Naive thymus-derived CD4-positive, alpha-beta T cell (primary cell): ENCODE measurements at regions of chr20 and their contacts with region 1.

Region 1: DNA sequence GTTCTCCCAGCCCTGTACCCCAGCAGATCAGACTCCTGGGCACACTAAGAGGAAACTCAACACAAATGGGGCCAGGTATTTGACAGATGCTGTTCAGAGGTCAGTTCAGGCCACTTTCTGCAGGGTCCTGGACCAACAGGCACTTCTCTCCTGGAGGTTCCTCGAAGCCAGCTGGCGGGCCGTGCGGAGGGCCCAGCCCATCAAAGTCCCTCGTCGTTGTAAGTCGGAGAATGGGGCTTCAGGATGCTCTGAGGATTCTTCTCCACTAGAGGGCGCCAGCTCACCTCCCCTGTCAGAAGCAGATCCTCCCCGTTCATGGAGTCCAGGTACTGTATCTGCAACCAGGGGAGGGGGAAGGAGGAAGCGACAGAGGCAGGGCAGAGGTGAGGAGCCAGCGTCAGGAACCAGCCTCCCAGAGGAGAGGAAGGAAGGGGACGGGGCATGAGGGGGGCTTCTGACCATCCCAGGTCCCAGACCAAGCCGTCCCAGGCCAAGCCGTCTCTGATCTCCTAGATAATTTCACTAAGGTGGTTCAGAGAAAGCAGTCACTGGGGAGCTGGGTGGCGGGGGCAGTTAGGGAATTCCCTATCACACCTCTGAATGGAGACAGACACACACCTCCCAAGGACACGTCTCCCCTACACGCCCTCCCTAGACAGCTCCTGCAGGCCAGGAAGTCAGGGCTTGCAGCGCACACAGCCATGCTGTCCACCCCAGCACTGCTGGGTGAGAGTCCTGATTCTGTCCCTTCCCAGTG is 11.7 kb upstream of the FAM83C start:
- DNase-seq: peak; percentile 57 to 87 (median 81)
- ATAC-seq: peak; percentile 96
- H3K4me3 ChIP-seq: no peak overlapping the region
- H3K4me3 Mint-ChIP-seq: no peak overlapping the region
- H3K27ac ChIP-seq: no peak overlapping the region
- H3K27ac Mint-ChIP-seq: peak overlapping the region in 6 of 9 donors; percentile 8 to 78 (median 60)
- H3K4me1 ChIP-seq: no peaks in the 10 kb centered on the region
- H3K4me1 Mint-ChIP-seq: peaks cover 0 to 40% (median 9%) of the 10 kb centered on the region in 7 donors
- H3K27me3 ChIP-seq: no peaks in the 10 kb centered on the region
- H3K27me3 Mint-ChIP-seq: no peaks in the 10 kb centered on the region

Region 2: DNA sequence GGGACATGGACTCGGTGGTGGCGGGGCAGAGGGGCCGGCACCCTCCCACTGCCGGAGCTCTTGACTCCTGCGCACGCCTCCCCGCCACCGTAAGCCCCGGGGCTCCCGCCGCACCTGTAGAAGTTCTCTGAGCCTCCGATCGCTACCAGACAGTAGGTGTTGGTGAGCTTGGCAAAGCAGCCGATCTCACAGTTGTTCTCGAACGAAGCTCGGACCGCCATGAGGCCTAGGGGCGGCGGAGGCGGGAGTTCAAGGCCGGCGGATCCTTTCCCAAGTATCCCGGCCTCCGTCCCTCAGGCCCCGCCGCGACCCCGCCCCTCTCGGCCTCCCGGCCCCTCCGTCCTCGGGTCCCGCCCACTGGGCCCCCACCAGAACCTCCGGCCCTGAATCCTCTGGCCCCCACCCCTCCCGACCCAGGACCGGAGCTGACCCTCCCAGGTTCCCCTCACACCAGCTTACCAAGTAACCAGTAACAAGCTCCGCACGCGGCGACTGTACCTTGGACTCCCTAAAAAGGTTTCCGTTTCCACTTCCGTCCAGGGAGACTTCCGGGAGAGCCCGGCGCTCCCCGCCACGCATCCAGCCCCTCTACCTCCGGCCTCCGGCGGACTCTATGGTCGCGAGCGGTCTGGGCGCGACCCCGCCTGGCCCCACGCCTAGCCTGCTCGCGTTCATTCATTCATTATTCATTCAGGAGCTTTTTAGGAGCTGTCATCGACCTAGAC is 19.5 kb before region 1 on chr20 and contains the start of gene EIF6:
- CTCF ChIA-PET with region 1: interaction called, 5 read pairs
- POLR2A ChIA-PET with region 1: interaction called, 5 read pairs
- intact Hi-C with region 1: loop called in 1 of 2 experiments (anchors 2 kb)
- DNase-seq: peak; percentile 23 to 78 (median 53)
- ATAC-seq: peak; percentile 80
- H3K4me3 ChIP-seq: peak within 1 kb of the TSS; percentile 56
- H3K4me3 Mint-ChIP-seq: peak within 1 kb of the TSS; percentile 71 to 96 (median 91)
- H3K27ac ChIP-seq: peak within 1 kb of the TSS; percentile 89
- H3K27ac Mint-ChIP-seq: peak within 1 kb of the TSS; percentile 79 to 94 (median 87)
- H3K4me1 ChIP-seq: peaks cover 7 to 8% of the 10 kb centered on the region in 2 donors
- H3K4me1 Mint-ChIP-seq: peaks cover 18 to 43% (median 30%) of the 10 kb centered on the region in 7 donors
- H3K27me3 ChIP-seq: no peaks in the 10 kb centered on the region
- H3K27me3 Mint-ChIP-seq: no peaks in the 10 kb centered on the region
- total RNA-seq, gene EIF6: 35.4 to 117 (median 39.9) TPM

Region 3: DNA sequence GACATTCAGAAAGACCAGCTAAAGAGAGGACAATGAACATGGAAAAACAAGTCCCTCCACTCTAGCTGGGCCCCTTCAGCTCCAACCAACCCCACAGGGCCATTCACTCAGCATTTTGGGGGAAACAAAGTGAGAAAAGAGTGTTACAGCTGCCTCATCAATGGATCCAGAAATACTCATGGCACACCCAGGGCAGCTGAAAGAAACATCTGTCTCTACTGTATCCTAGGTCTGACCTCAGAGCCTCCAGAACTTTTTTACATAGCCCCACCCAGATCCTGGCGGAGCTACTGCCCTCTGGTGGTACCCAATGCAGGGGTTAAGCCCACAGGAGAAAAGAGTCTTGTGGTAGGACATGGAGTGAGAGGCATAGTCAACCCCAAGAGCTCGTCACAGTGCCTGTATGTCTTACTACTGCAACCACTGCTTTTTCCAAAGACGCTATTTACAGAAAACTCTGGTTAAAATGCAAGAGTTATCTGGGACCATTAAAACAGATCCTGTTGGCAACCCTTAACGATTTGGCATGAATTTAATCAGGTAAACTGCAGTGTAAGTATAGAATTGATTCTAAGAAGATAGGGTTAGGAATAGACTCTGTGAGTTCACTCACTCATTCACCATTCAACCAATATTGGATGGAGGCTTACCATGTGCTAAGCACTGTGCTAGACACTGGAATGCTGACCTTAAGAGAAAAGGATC is 25.7 kb after region 1 on chr20:
- CTCF ChIA-PET with region 1: no interaction called
- POLR2A ChIA-PET with region 1: no interaction called
- intact Hi-C with region 1: loop called in 1 of 2 experiments (anchors 1 kb)
- DNase-seq: peak in 4 of 9 donors; percentile 12 to 51 (median 16)
- ATAC-seq: peak; percentile 62
- H3K4me3 ChIP-seq: no peak overlapping the region
- H3K4me3 Mint-ChIP-seq: no peak overlapping the region
- H3K27ac ChIP-seq: no peak overlapping the region
- H3K27ac Mint-ChIP-seq: no peak overlapping the region
- H3K4me1 ChIP-seq: no peaks in the 10 kb centered on the region
- H3K4me1 Mint-ChIP-seq: peaks cover 0 to 12% (median 0%) of the 10 kb centered on the region in 7 donors
- H3K27me3 ChIP-seq: no peaks in the 10 kb centered on the region
- H3K27me3 Mint-ChIP-seq: no peaks in the 10 kb centered on the region